Posterior vena cava (tissue), 2 donors: ENCODE measurements at regions of chr2 and their contacts with region 1.

Region 1: GRCh38 chr2:220871918-220872317 is 700.2 kb downstream of the EPHA4 start:
- DNase-seq: no peak

Region 2: GRCh38 chr2:220300806-220301205 is 571.1 kb before region 1 on chr2:
- intact Hi-C with region 1: no loop called
- DNase-seq: no peak

Region 3: GRCh38 chr2:220855296-220855695 is 16.6 kb before region 1 on chr2:
- intact Hi-C with region 1: loop called in 1 of 2 experiments (anchors 1 kb)
- DNase-seq: no peak